Right ventricle myocardium inferior (tissue), 1 donor: ENCODE measurements at regions of chr6 and their contacts with region 1.

Region 1: DNA sequence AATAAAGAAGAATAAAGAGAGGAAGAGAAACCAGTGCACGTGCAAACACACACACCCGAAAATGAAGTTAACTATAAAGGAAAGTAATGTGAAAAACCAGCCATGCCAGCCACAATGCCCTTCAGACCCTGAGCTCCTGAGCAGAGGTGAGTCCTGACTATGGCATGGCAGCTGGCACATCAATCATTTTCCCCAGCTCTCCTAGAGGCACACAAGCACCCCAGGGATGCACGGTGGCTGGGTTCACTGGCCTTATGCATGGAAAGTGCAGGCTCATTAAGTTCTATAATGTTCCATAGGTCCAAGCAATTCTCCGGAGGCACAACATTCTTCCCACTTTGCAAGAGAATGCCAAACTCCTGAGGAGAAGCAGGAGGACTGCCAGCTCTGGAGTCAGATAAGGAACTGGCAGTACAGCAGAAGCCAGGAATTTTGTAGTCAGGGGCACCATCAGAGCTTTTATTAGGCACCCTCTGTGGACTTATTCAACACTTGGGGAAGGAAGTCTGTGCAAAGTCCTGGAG is 175.0 kb upstream of the PRDM1 start:
- DNase-seq: no peak
- ATAC-seq: peak; percentile 68

Region 2: GRCh38 chr6:105793130-105793529 is 118.0 kb before region 1 on chr6:
- intact Hi-C with region 1: loop called (anchors 10 kb)
- DNase-seq: no peak
- ATAC-seq: no peak